CD4-positive, alpha-beta memory T cell (primary cell): ENCODE measurements at regions of chr5 and their contacts with region 1.

Region 1: GRCh38 chr5:74640450-74640953 is at the start of gene ENC1:
- DNase-seq: peak; percentile 61 to 73 (median 72)
- H3K4me3 ChIP-seq: peak within 1 kb of the TSS; percentile 54 to 64
- H3K4me3 Mint-ChIP-seq: peak within 1 kb of the TSS; percentile 84 to 96 (median 90)
- H3K27ac ChIP-seq: peak within 1 kb of the TSS; percentile 26
- H3K27ac Mint-ChIP-seq: peak within 1 kb of the TSS in 4 of 7 donors; percentile 27 to 54 (median 34)
- H3K4me1 ChIP-seq: peaks cover 25% of the 10 kb centered on the region
- H3K4me1 Mint-ChIP-seq: peaks cover 15 to 33% (median 22%) of the 10 kb centered on the region in 4 donors
- H3K27me3 ChIP-seq: no peaks in the 10 kb centered on the region
- H3K27me3 Mint-ChIP-seq: peaks cover 10 to 13% of the 10 kb centered on the region in 2 donors
- total RNA-seq, gene ENC1: 0.61 to 0.84 TPM

Region 2: DNA sequence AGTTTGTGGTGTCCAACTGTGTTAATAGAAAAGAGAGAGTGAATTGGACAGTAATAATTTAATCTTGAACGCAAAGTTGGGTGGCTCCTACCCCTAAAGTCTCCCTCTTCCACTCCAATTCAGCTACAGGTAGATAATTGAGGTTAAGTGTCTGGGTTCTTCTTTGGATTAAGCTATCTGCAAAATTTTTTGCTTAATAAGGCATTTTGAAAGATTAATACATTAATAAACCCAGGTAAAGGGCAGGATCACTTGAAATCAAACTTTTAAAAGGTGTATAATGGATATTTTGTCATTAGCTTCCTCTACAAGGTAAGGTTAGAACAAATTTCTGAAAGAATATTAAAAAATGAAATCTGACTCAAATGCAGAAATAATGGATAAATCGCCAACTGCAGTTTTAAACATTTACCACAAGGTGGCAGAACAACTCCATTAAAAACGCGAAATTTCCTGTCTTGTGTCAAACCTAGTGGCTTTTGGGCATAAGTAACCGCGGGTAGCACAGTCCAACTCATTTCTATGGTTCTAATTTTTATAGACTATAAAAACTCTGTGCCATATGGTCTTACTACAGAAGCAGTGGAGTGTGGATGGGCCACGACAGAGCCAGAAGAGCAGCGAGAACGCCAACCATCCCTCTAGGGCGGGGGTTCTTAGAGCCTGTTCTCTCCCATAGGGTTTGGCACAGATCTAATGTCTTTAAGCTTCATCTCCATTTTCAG is 738.0 kb before region 1 on chr5:
- CTCF ChIA-PET with region 1: interaction called, 58 read pairs
- POLR2A ChIA-PET with region 1: no interaction called
- intact Hi-C with region 1: loop called (anchors 2 kb)
- DNase-seq: peak in 4 of 5 donors; percentile 44 to 51 (median 48)
- H3K4me3 ChIP-seq: no peak overlapping the region
- H3K4me3 Mint-ChIP-seq: no peak overlapping the region
- H3K27ac ChIP-seq: no peak overlapping the region
- H3K27ac Mint-ChIP-seq: no peak overlapping the region
- H3K4me1 ChIP-seq: no peaks in the 10 kb centered on the region
- H3K4me1 Mint-ChIP-seq: no peaks in the 10 kb centered on the region
- H3K27me3 ChIP-seq: no peaks in the 10 kb centered on the region
- H3K27me3 Mint-ChIP-seq: peaks cover 15 to 28% of the 10 kb centered on the region in 2 donors

Region 3: GRCh38 chr5:74035521-74035981 is 605.0 kb before region 1 on chr5:
- CTCF ChIA-PET with region 1: no interaction called
- POLR2A ChIA-PET with region 1: no interaction called
- intact Hi-C with region 1: loop called (anchors 10 kb)
- DNase-seq: no peak
- H3K4me3 ChIP-seq: no peak overlapping the region
- H3K4me3 Mint-ChIP-seq: peak overlapping the region in 1 of 8 donors; percentile 58
- H3K27ac ChIP-seq: no peak overlapping the region
- H3K27ac Mint-ChIP-seq: no peak overlapping the region
- H3K4me1 ChIP-seq: no peaks in the 10 kb centered on the region
- H3K4me1 Mint-ChIP-seq: peaks cover 0 to 7% (median 4%) of the 10 kb centered on the region in 4 donors
- H3K27me3 ChIP-seq: no peaks in the 10 kb centered on the region
- H3K27me3 Mint-ChIP-seq: peaks cover 1 to 11% of the 10 kb centered on the region in 2 donors

Region 4: GRCh38 chr5:74294231-74294705 is 346.2 kb before region 1 on chr5:
- CTCF ChIA-PET with region 1: no interaction called
- POLR2A ChIA-PET with region 1: no interaction called
- intact Hi-C with region 1: loop called (anchors 10 kb)
- DNase-seq: no peak
- H3K4me3 ChIP-seq: no peak overlapping the region
- H3K4me3 Mint-ChIP-seq: no peak overlapping the region
- H3K27ac ChIP-seq: no peak overlapping the region
- H3K27ac Mint-ChIP-seq: no peak overlapping the region
- H3K4me1 ChIP-seq: no peaks in the 10 kb centered on the region
- H3K4me1 Mint-ChIP-seq: no peaks in the 10 kb centered on the region
- H3K27me3 ChIP-seq: no peaks in the 10 kb centered on the region
- H3K27me3 Mint-ChIP-seq: peaks cover 4 to 9% of the 10 kb centered on the region in 2 donors

Region 5: DNA sequence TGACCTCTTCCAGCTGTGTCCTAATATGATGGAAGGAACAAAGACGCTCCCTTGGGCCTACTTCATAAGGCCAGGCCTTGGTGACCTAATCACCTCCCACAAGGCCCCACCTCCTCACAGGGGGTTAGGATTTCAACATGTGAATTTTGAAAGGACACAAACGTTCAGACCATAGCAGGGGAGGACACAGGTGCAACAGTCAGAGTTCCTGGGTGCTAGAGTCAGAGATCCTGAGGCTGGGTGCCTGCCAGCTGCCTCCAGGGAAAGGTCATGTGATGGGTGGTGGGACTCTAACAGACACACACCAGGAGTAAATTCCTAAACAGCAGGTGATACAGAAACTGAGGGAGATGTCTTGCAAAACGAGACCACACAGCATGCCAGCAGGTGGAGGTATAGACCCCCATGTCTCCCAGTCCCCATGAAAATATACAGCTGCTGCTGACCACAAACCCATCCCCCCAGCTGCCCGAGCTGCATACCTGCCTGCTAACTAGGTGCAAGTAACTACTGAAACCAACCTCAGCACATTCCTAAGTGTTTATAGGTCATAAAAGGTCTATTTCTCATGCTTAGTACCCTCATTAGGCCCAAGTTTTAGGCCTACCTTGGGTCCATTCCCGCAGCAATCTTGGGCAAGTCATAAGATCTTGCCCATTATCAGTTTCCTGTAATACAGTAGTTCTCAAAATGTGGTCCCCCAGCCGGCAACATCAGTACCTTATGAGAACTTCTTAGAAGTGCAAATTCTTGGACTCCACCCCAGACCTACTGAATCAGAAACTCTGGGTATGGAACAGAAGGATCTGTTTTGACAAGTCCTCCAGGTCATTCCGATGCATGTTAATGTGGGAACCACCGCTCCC is 245.4 kb before region 1 on chr5:
- CTCF ChIA-PET with region 1: interaction called, 4 read pairs
- POLR2A ChIA-PET with region 1: no interaction called
- intact Hi-C with region 1: loop called (anchors 2 kb)
- DNase-seq: no peak
- H3K4me3 ChIP-seq: no peak overlapping the region
- H3K4me3 Mint-ChIP-seq: no peak overlapping the region
- H3K27ac ChIP-seq: no peak overlapping the region
- H3K27ac Mint-ChIP-seq: no peak overlapping the region
- H3K4me1 ChIP-seq: no peaks in the 10 kb centered on the region
- H3K4me1 Mint-ChIP-seq: no peaks in the 10 kb centered on the region
- H3K27me3 ChIP-seq: no peaks in the 10 kb centered on the region
- H3K27me3 Mint-ChIP-seq: peaks cover 0 to 2% of the 10 kb centered on the region in 2 donors

Region 6: GRCh38 chr5:74576941-74577456 is 63.5 kb before region 1 on chr5:
- CTCF ChIA-PET with region 1: interaction called, 4 read pairs
- POLR2A ChIA-PET with region 1: interaction called, 3 read pairs
- intact Hi-C with region 1: loop called (anchors 2 kb)
- DNase-seq: peak in 4 of 5 donors; percentile 26 to 34 (median 32)
- H3K4me3 ChIP-seq: peak overlapping the region; percentile 16 to 52
- H3K4me3 Mint-ChIP-seq: peak overlapping the region; percentile 76 to 93 (median 85)
- H3K27ac ChIP-seq: peak overlapping the region; percentile 34
- H3K27ac Mint-ChIP-seq: peak overlapping the region; percentile 59 to 95 (median 91)
- H3K4me1 ChIP-seq: peaks cover 48% of the 10 kb centered on the region
- H3K4me1 Mint-ChIP-seq: peaks cover 31 to 56% (median 40%) of the 10 kb centered on the region in 4 donors
- H3K27me3 ChIP-seq: no peaks in the 10 kb centered on the region
- H3K27me3 Mint-ChIP-seq: no peaks in the 10 kb centered on the region

Region 7: DNA sequence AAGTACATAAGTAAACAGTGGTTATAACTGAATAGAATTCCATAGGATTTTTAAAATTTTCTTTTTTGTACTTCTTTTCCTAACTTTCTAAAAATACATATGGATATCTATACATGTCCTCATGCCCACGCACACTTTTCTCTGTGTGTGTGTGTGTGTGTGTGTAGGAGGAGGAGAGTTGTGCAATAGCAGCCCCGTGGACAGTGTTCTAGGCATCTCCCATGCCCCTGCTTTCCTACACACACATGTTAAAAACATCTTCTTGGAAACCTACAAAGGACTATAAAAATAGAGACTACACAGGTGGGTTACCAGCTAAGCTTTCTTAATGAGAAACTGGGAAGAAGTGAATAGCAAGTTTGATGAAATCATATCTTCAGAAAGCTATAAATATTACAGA is 24.8 kb after region 1 on chr5:
- CTCF ChIA-PET with region 1: no interaction called
- POLR2A ChIA-PET with region 1: no interaction called
- intact Hi-C with region 1: no loop called
- DNase-seq: no peak
- H3K4me3 ChIP-seq: no peak overlapping the region
- H3K4me3 Mint-ChIP-seq: no peak overlapping the region
- H3K27ac ChIP-seq: no peak overlapping the region
- H3K27ac Mint-ChIP-seq: no peak overlapping the region
- H3K4me1 ChIP-seq: no peaks in the 10 kb centered on the region
- H3K4me1 Mint-ChIP-seq: no peaks in the 10 kb centered on the region
- H3K27me3 ChIP-seq: no peaks in the 10 kb centered on the region
- H3K27me3 Mint-ChIP-seq: peaks cover 11 to 14% of the 10 kb centered on the region in 2 donors

Region 8: GRCh38 chr5:74684900-74685851 is 44.7 kb after region 1 on chr5 and contains the start of gene HEXB:
- CTCF ChIA-PET with region 1: no interaction called
- POLR2A ChIA-PET with region 1: no interaction called
- intact Hi-C with region 1: loop called (anchors 1 kb)
- DNase-seq: peak; percentile 72 to 83 (median 78)
- H3K4me3 ChIP-seq: peak within 1 kb of the TSS; percentile 61 to 71
- H3K4me3 Mint-ChIP-seq: peak within 1 kb of the TSS; percentile 79 to 92 (median 88)
- H3K27ac ChIP-seq: peak within 1 kb of the TSS; percentile 73
- H3K27ac Mint-ChIP-seq: peak within 1 kb of the TSS; percentile 68 to 92 (median 84)
- H3K4me1 ChIP-seq: peaks cover 26% of the 10 kb centered on the region
- H3K4me1 Mint-ChIP-seq: peaks cover 22 to 35% (median 26%) of the 10 kb centered on the region in 4 donors
- H3K27me3 ChIP-seq: peaks cover 3% of the 10 kb centered on the region
- H3K27me3 Mint-ChIP-seq: no peaks in the 10 kb centered on the region
- total RNA-seq, gene HEXB: 62.3 to 70.9 TPM